ENCODE measurements at regions of chr5 and their contacts with region 1.

Region 1: GRCh38 chr5:140381972-140382371 is 19.7 kb upstream of the ANKHD1 start:
- DNase-seq: no peak
- H3K4me3 ChIP-seq: no peak overlapping the region
- H3K27ac ChIP-seq: no peak overlapping the region
- H3K4me1 ChIP-seq: no peaks in the 10 kb centered on the region
- H3K27me3 ChIP-seq: no peaks in the 10 kb centered on the region
- CTCF ChIP-seq: no peak
- EP300 ChIP-seq: no peak
- POLR2A ChIP-seq: no peak

Region 2: DNA sequence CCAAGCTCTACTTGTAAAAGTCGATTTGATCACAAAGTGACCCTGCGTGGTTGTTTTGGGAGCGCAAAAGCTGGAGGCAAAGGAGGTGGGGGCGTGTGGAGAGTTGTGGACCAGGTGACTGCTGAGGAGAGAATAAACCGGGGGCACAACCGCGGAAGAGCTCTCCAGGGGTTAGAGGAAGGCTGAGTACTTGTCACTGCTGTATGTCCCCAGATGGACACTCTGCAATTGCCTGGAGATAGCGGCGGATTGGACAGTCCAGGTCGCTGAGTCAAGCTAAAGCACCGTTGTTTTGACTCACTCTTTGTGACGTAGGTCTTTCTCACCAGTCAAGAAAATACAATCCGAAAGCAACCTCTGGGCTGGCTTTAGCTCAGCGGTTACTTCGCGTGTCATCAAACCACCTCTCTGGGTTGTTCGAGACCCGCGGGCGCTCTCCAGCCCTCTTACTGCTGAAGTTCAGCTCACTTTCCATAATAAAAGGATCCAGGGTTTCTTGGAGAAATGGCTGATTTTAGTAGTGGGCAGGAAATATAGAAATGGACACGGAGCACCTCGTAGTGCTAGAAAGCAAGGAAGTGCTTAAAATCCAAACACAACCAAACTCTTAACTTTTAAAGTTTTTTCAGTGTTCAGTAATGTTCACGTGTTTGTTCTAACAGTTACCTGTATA is 344.0 kb after region 1 on chr5:
- in situ Hi-C with region 1: loop called in 1 of 4 experiments (anchors 10 kb)
- intact Hi-C with region 1: no loop called
- DNase-seq: peak; percentile 33
- H3K4me3 ChIP-seq: no peak overlapping the region
- H3K27ac ChIP-seq: no peak overlapping the region
- H3K4me1 ChIP-seq: no peaks in the 10 kb centered on the region
- H3K27me3 ChIP-seq: peaks cover 28% of the 10 kb centered on the region
- CTCF ChIP-seq: no peak
- EP300 ChIP-seq: no peak
- POLR2A ChIP-seq: no peak